ENCODE measurements at regions of chr1 and their contacts with region 1.

Region 1: GRCh38 chr1:8525558-8526275 is 207.8 kb downstream of the SLC45A1 start:
- DNase-seq: peak; percentile 69
- H3K4me3 Mint-ChIP-seq: no peak overlapping the region
- H3K27ac Mint-ChIP-seq: no peak overlapping the region
- H3K4me1 Mint-ChIP-seq: peaks cover 20% of the 10 kb centered on the region
- H3K27me3 Mint-ChIP-seq: no peaks in the 10 kb centered on the region

Region 2: GRCh38 chr1:8396786-8397406 is 128.8 kb before region 1 on chr1:
- intact Hi-C with region 1: loop called (anchors 1 kb)
- DNase-seq: no peak
- H3K4me3 Mint-ChIP-seq: no peak overlapping the region
- H3K27ac Mint-ChIP-seq: peak overlapping the region; percentile 71
- H3K4me1 Mint-ChIP-seq: peaks cover 63% of the 10 kb centered on the region
- H3K27me3 Mint-ChIP-seq: no peaks in the 10 kb centered on the region

Region 3: GRCh38 chr1:8477166-8477982 is 48.3 kb before region 1 on chr1:
- intact Hi-C with region 1: loop called (anchors 1 kb)
- DNase-seq: no peak
- H3K4me3 Mint-ChIP-seq: peak overlapping the region; percentile 1
- H3K27ac Mint-ChIP-seq: peak overlapping the region; percentile 80
- H3K4me1 Mint-ChIP-seq: peaks cover 60% of the 10 kb centered on the region
- H3K27me3 Mint-ChIP-seq: no peaks in the 10 kb centered on the region

Region 4: DNA sequence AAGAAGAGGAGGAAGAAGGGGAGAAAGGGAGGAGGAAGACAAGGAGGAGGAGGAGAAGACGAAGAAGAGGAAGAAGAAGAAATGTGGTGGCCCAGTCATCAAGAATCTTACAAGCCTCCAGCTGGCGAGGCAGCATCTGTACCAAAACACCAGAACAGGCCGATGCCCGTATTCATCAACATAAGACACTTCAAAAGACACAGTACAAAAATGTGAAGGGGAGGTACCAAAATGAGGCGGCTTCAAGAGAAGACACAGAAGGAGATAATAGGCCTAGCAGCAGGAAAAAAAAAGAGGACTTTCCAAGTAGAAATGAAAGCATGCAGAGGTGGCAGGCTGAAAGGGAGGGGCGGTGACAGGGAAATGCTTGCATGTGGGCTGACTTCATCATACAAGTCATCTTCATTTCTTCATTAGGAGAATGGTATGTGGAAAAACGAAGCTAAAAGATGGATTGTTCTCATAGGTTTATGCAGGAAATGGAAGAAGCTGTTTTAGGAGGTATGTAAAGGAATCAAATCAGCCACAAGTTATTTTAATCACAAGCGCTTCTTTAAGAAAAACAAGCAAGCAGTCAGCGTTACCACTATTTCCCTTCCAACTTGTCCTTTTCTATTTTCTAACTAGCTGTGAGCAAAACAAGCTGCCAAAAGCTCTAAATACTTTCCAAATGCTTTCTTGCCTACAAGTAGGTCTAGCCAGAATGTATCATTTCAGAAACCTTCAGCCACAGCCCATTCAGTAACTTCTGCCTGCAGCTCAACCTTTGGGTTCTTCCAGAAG is 15.5 kb before region 1 on chr1:
- intact Hi-C with region 1: loop called (anchors 1 kb)
- DNase-seq: peak; percentile 47
- H3K4me3 Mint-ChIP-seq: peak overlapping the region; percentile 54
- H3K27ac Mint-ChIP-seq: peak overlapping the region; percentile 88
- H3K4me1 Mint-ChIP-seq: peaks cover 47% of the 10 kb centered on the region
- H3K27me3 Mint-ChIP-seq: no peaks in the 10 kb centered on the region

Region 5: DNA sequence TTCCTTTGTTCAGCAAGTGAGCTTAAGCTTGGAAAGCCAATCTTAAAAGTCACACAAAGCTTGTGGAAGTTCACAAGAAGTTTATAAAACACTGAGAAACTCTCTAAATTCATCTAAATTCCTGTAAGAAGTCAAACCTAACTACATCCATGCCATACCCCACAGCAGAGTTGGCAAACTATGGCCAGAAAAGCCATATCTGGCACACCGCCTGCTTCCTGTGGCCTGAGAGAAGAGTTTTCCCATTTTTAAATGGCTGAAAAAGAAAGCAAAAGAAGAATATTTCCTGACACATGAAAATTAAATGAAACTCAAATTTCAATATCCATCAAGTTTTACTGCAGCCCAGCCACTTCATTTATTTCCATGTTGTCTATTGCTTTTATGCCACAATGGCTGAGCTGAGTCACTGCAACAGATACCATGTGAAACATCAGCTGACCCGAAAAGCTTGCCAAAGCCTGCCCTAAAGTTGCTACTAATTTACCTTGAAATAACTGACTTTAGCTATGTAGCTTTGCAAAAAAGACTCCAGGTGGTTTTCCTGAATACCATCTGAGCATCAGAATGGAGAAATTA is 29.3 kb after region 1 on chr1:
- intact Hi-C with region 1: loop called (anchors 1 kb)
- DNase-seq: no peak
- H3K4me3 Mint-ChIP-seq: peak overlapping the region; percentile 17
- H3K27ac Mint-ChIP-seq: peak overlapping the region; percentile 84
- H3K4me1 Mint-ChIP-seq: peaks cover 55% of the 10 kb centered on the region
- H3K27me3 Mint-ChIP-seq: no peaks in the 10 kb centered on the region

Region 6: GRCh38 chr1:8604041-8604945 is 78.6 kb after region 1 on chr1:
- intact Hi-C with region 1: loop called (anchors 1 kb)
- DNase-seq: peak; percentile 34
- H3K4me3 Mint-ChIP-seq: peak overlapping the region; percentile 61
- H3K27ac Mint-ChIP-seq: peak overlapping the region; percentile 94
- H3K4me1 Mint-ChIP-seq: peaks cover 48% of the 10 kb centered on the region
- H3K27me3 Mint-ChIP-seq: no peaks in the 10 kb centered on the region

Measured in activated T-helper 1 cell treated with anti-CD3 and anti-CD28 coated beads, Interleukin-12 subunit alpha, Interleukin-12 subunit beta, Interleukin-2, Interleukin-4 antibody, amounts not matched to agents 30 ng/mL and 10 ng/mL and 1 ng/mL, durations not matched to agents 14 hours and 24 hours and 36 hours (primary cell).